Heart left ventricle (tissue), 16 donors: ENCODE measurements at regions of chr9 and their contacts with region 1.

Region 1: GRCh38 chr9:135907431-135908092 is at the start of gene CAMSAP1:
- DNase-seq: peak; percentile 94 to 98 (median 95)
- ATAC-seq: peak; percentile 91 to 98 (median 98)
- H3K4me3 ChIP-seq: peak within 1 kb of the TSS; percentile 61 to 95 (median 79)
- H3K27ac ChIP-seq: peak within 1 kb of the TSS in 11 of 12 donors; percentile 76 to 94 (median 88)
- H3K4me1 ChIP-seq: peaks cover 0 to 55% (median 37%) of the 10 kb centered on the region in 12 donors
- H3K27me3 ChIP-seq: no peaks in the 10 kb centered on the region
- CTCF ChIP-seq: no peak
- POLR2A ChIP-seq: peak in 1 of 2 donors; percentile 83
- total RNA-seq, gene CAMSAP1: 15.6 to 38.3 (median 22.5) TPM

Region 2: DNA sequence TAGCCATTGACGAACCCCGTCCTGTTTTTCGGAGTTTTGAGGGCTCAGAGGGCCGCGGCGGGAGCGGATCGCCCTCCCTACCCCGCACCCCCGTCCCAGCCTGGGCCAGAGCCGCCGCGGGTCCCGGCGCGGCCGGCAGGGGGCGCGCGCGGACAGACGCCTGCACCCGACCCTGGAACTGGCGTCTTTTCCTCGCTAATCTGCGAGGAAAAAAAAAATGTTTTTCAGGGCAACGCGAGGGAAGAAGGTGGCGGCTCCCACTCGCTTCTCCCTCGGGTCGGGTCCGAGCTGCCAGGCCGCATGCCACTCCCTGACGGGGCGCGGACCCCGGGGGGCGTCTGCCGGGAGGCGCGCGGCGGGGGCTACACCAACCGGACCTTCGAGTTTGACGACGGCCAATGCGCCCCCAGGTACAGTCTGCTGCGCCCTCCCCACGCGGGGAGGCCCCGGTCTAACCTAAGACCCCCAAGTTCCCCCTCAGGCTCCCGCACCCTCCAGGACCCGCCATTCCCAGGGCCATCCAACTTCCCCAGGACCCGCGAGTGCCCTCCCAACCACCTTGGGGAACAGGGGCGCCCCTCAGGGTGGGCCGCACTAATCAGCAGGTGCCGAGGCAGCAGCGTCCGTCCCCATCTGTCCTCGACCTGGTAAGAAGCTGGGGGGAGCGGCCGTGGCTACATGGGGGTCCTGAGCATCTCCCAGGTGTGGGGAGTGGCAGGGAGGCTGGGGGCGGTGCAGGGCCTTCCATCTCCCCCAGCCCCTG is 205.4 kb before region 1 on chr9 and contains the start of gene KCNT1:
- intact Hi-C with region 1: loop called in 1 of 10 experiments (anchors 10 kb)
- DNase-seq: peak in 2 of 5 donors; percentile 31 to 42
- ATAC-seq: peak in 2 of 4 donors; percentile 37 to 63
- H3K4me3 ChIP-seq: peak within 1 kb of the TSS in 7 of 12 donors; percentile 10 to 37 (median 21)
- H3K27ac ChIP-seq: no peak within 1 kb of the TSS
- H3K4me1 ChIP-seq: peaks cover 0 to 30% (median 10%) of the 10 kb centered on the region in 12 donors
- H3K27me3 ChIP-seq: peaks cover 0 to 45% (median 18%) of the 10 kb centered on the region in 9 donors
- CTCF ChIP-seq: peak; percentile 75 to 98 (median 90)
- POLR2A ChIP-seq: no peak
- total RNA-seq, gene KCNT1: 0.50 to 7.4 (median 2.6) TPM

Region 3: GRCh38 chr9:135850737-135851136 is 56.8 kb before region 1 on chr9:
- intact Hi-C with region 1: no loop called
- DNase-seq: no peak
- ATAC-seq: no peak
- H3K4me3 ChIP-seq: no peak overlapping the region
- H3K27ac ChIP-seq: no peak overlapping the region
- H3K4me1 ChIP-seq: no peaks in the 10 kb centered on the region
- H3K27me3 ChIP-seq: no peaks in the 10 kb centered on the region
- CTCF ChIP-seq: no peak
- POLR2A ChIP-seq: no peak

Region 4: DNA sequence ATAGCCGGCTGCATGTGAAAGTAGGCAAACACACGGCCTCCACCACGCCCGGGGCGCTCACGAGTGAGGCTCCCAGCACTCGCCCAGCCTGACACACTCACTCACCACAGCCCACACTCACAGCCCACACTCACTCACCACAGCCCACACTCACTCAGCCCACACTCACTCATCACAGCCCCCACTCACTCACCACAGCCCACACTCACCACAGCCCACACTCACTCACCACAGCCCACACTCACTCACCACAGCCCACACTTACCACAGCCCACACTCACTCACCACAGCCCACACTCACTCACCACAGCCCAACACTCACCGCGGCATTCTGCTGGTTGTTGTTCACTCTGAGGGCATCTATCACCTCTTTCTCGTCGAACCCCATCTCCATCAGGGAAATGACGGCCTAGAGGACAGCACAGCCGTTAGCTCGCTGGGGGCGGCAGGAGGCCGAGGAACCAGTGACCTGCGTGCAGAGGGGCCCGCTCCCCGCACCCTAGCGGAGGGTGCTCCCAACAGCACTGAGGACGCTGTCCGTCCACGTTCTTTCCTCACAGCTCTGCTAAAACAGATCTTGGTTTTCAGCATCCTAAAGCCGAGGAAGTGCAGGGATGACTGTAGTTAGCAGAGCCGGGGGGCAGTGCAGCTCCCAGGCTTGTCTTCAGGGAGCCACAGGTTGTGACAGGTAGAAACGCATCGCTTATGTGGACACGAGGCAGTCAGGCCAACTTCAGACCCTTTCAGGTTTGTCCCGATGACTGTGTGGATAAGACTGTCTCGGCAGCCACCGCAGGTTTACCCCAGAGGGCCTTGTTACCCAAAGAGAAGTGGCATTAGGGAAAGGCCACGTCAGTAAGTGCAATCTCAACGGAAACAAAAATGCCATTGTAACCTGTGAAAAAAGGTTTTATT is 32.0 kb after region 1 on chr9:
- intact Hi-C with region 1: loop called in 1 of 10 experiments (anchors 1 kb)
- DNase-seq: peak in 2 of 5 donors; percentile 6 to 13
- ATAC-seq: no peak
- H3K4me3 ChIP-seq: no peak overlapping the region
- H3K27ac ChIP-seq: no peak overlapping the region
- H3K4me1 ChIP-seq: peaks cover 0 to 20% (median 11%) of the 10 kb centered on the region in 12 donors
- H3K27me3 ChIP-seq: no peaks in the 10 kb centered on the region
- CTCF ChIP-seq: no peak
- POLR2A ChIP-seq: no peak

Region 5: GRCh38 chr9:135971892-135972291 is 64.3 kb after region 1 on chr9:
- intact Hi-C with region 1: no loop called
- DNase-seq: no peak
- ATAC-seq: no peak
- H3K4me3 ChIP-seq: no peak overlapping the region
- H3K27ac ChIP-seq: no peak overlapping the region
- H3K4me1 ChIP-seq: peaks cover 0 to 37% (median 13%) of the 10 kb centered on the region in 12 donors
- H3K27me3 ChIP-seq: peaks cover 0 to 3% (median 0%) of the 10 kb centered on the region in 9 donors
- CTCF ChIP-seq: no peak
- POLR2A ChIP-seq: no peak